Lower lobe of right lung (tissue), 2 donors: ENCODE measurements at regions of chr6 and their contacts with region 1.

Region 1: GRCh38 chr6:99467509-99468106 is 42.5 kb upstream of the PNISR start:
- DNase-seq: no peak
- ATAC-seq: peak in 1 of 2 donors; percentile 48
- H3K4me3 ChIP-seq: no peak overlapping the region
- H3K27ac ChIP-seq: no peak overlapping the region
- H3K4me1 ChIP-seq: no peaks in the 10 kb centered on the region
- H3K27me3 ChIP-seq: no peaks in the 10 kb centered on the region
- CTCF ChIP-seq: peak; percentile 65

Region 2: GRCh38 chr6:99711302-99711701 is 243.7 kb after region 1 on chr6:
- intact Hi-C with region 1: no loop called
- DNase-seq: no peak
- ATAC-seq: no peak
- H3K4me3 ChIP-seq: no peak overlapping the region
- H3K27ac ChIP-seq: no peak overlapping the region
- H3K4me1 ChIP-seq: no peaks in the 10 kb centered on the region
- H3K27me3 ChIP-seq: no peaks in the 10 kb centered on the region
- CTCF ChIP-seq: no peak

Region 3: DNA sequence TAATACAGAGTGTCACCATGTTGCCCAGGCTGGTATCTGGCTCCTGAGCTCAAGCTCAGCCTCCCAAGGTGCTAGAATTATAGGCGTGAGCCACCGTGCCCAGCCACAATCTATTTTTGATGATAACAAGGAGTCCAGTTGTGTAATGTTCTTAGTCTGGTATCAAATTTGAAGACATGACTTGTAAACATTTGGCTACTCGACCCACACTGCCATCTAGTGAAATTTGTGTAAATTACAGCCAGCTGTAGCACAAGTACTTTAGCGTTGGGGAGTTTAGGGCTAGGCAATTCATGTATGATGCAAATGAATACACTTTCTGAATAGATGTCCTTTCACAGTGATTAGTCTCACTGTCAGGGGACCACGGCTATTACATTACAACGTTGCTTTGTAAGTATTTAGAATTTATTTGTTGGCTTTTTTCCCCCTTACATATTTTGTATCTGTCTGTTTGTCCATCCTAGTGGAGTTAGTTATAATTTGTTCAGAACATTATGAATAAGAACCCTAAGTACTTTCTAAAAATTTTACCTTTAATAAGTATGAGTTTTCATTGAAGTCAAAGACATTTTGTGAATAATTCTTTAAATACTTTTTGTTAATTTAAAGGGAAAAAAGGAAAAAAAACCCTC is 278.8 kb after region 1 on chr6:
- intact Hi-C with region 1: loop called (anchors 10 kb)
- DNase-seq: no peak
- ATAC-seq: peak; percentile 85 to 92
- H3K4me3 ChIP-seq: no peak overlapping the region
- H3K27ac ChIP-seq: no peak overlapping the region
- H3K4me1 ChIP-seq: peaks cover 4% of the 10 kb centered on the region
- H3K27me3 ChIP-seq: peaks cover 5% of the 10 kb centered on the region
- CTCF ChIP-seq: peak; percentile 86